ENCODE measurements at regions of chr2 and their contacts with region 1.

Region 1: GRCh38 chr2:7930800-7931635 is 750.8 kb upstream of the ID2 start:
- DNase-seq: no peak
- H3K4me3 Mint-ChIP-seq: no peak overlapping the region
- H3K27ac Mint-ChIP-seq: peak overlapping the region; percentile 81
- H3K4me1 Mint-ChIP-seq: peaks cover 11% of the 10 kb centered on the region
- H3K27me3 Mint-ChIP-seq: no peaks in the 10 kb centered on the region

Region 2: GRCh38 chr2:7984693-7985353 is 53.8 kb after region 1 on chr2:
- intact Hi-C with region 1: loop called (anchors 2 kb)
- DNase-seq: no peak
- H3K4me3 Mint-ChIP-seq: peak overlapping the region; percentile 12
- H3K27ac Mint-ChIP-seq: peak overlapping the region; percentile 82
- H3K4me1 Mint-ChIP-seq: peaks cover 28% of the 10 kb centered on the region
- H3K27me3 Mint-ChIP-seq: no peaks in the 10 kb centered on the region

Region 3: DNA sequence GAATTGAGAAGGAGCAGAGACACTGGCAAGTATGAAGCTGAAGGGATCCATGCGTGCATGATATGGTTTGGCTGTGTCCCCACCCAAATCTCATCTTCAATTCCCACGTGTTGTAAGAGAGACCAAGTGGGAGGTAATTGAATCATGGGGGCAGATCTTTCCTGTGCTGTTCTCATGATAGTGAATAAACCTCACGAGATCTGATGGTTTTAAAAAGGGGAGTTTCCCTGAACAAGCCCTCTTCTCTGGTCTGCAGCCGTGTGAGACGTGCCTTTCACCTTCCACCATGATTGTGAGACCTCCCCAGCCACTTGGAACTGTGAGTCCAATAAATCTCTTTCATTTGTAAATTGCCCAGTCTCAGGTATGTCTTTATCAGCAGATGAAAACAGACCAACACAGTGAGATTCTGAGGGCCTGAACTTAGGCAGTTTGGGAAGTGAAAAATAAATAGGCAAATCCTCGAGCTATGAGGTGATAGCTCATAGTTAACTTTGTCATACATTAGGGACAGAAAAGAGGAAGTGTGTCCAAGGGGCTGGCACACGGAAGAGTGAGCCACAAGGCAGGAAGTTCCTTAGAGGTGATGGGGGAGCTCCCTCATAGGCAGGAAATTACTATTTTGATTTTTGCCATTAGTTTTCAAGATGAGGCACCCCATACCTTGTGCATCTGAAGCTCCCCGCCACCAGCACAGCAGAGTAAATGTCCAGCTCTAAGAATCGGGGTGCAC is 92.1 kb after region 1 on chr2:
- intact Hi-C with region 1: no loop called
- DNase-seq: no peak
- H3K4me3 Mint-ChIP-seq: no peak overlapping the region
- H3K27ac Mint-ChIP-seq: no peak overlapping the region
- H3K4me1 Mint-ChIP-seq: peaks cover 21% of the 10 kb centered on the region
- H3K27me3 Mint-ChIP-seq: peaks cover 2% of the 10 kb centered on the region

Measured in activated T-helper 1 cell treated with anti-CD3 and anti-CD28 coated beads, Interleukin-12 subunit alpha, Interleukin-12 subunit beta, Interleukin-2, Interleukin-4 antibody, amounts not matched to agents 30 ng/mL and 10 ng/mL and 1 ng/mL, durations not matched to agents 14 hours and 24 hours and 36 hours (primary cell).